PC-3 (cell line): ENCODE measurements at regions of chr2 and their contacts with region 1.

Region 1: DNA sequence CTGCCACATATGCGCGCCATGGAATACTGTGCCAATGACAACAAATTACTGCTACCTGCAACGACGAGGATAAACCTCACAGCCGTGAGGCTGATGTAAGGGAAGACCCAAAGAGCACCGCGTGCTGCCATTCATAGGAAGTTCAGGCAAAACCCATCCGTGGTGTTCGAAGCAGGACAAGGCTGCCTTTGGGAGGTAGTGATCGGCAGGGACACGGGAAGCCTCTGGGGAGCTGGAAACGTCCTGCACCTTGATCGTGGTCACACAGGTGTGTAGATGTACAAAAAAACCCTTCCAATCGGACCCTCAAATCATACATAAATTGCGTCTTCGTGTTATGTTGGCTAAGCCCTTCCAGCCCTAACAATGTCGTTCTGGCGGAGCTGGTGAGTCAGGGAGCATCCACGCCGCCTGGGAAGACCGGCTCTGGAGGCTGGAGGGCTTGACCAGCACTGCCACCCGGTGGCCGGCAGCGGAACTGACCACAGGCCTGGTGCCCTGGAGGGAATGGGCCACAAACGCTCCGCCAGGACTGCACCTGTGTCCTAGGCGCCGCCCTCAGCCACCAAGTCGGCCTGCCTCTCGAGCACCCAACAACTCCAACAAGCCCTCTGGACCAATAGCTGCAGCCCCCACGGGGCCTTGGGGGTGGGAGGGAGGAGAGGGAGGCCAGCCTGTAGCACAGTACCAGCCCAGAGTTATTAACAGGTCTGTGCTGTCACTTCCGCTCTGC is 4.1 kb upstream of the NEURL3 start:
- DNase-seq: peak; percentile 93
- ATAC-seq: peak; percentile 77
- H3K4me3 ChIP-seq: no peak overlapping the region
- H3K27ac ChIP-seq: no peak overlapping the region
- H3K4me1 ChIP-seq: peaks cover 27% of the 10 kb centered on the region
- H3K27me3 ChIP-seq: no peaks in the 10 kb centered on the region
- CTCF ChIP-seq: peak; percentile 94

Region 2: GRCh38 chr2:96344011-96344410 is 165.3 kb before region 1 on chr2:
- CTCF ChIA-PET with region 1: no interaction called
- POLR2A ChIA-PET with region 1: no interaction called
- intact Hi-C with region 1: loop called (anchors 5 kb)
- DNase-seq: no peak
- ATAC-seq: no peak
- H3K4me3 ChIP-seq: no peak overlapping the region
- H3K27ac ChIP-seq: no peak overlapping the region
- H3K4me1 ChIP-seq: peaks cover 32% of the 10 kb centered on the region
- H3K27me3 ChIP-seq: no peaks in the 10 kb centered on the region
- CTCF ChIP-seq: no peak

Region 3: DNA sequence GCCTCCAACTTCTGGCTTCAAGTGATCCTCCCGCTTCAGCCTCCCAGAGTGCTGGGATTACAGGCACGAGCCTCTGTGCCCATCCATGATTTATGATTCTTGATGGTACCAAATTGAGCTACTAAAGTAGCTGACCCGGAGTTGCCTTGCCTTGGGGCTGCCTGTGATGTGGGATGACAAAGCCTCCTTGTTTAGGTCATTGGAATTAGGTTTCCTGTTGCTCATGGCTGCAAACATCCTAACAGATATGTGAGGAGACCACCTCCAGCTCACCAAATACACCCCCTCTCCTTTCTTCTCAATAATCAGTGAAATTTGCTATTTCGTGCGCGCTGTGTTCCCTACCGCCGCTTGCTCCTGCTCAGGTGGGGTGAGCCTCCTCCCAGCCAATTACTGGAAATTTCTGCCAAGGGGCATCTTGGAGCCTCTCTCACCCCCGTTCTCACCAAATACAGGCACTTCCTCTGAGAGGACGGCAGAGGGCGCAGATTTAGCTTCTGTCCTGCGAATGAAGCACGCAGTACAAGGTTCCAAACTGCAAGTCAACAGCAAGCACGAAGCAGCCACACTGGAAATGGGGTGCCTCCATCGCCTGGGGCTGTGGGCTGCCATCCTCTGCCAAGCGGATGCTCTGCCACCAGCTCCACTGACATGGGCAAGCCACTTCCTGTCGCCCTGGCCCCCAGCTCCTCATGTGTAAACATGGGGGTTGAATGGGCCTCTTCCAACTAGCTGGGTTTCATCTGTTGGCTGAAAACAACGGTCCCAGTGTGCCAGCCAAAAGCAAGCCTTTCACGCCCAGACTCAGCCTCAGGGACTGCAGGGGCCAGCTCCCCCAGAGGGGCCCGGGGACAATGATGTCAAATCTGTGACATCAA is 102.0 kb before region 1 on chr2:
- CTCF ChIA-PET with region 1: interaction called, 38 read pairs
- POLR2A ChIA-PET with region 1: no interaction called
- intact Hi-C with region 1: loop called (anchors 1 kb)
- DNase-seq: peak; percentile 81
- ATAC-seq: peak; percentile 54
- H3K4me3 ChIP-seq: no peak overlapping the region
- H3K27ac ChIP-seq: peak overlapping the region; percentile 80
- H3K4me1 ChIP-seq: peaks cover 54% of the 10 kb centered on the region
- H3K27me3 ChIP-seq: no peaks in the 10 kb centered on the region
- CTCF ChIP-seq: peak; percentile 94

Region 4: DNA sequence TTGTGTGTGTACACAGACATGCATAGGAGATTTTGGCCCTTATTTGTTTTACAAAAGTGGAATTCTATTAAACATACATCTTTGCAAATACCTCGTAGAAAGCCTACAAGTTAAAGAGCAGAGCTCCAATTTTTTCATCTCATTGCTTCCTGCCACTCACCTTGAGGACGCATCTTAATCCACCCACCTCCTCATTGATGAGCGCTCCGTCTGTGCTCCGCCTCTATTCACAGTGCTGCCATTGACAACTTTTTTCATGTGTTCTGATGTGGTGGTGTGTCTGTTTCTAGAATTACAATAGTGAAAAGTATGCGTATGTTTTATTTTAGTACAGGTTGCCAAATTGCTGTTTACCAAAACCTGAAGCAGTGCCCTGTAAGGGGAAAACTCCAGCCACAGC is 40.4 kb before region 1 on chr2:
- CTCF ChIA-PET with region 1: no interaction called
- POLR2A ChIA-PET with region 1: no interaction called
- intact Hi-C with region 1: loop called (anchors 5 kb)
- DNase-seq: no peak
- ATAC-seq: no peak
- H3K4me3 ChIP-seq: no peak overlapping the region
- H3K27ac ChIP-seq: no peak overlapping the region
- H3K4me1 ChIP-seq: no peaks in the 10 kb centered on the region
- H3K27me3 ChIP-seq: no peaks in the 10 kb centered on the region
- CTCF ChIP-seq: no peak

Region 5: GRCh38 chr2:97788986-97789644 is 1279.8 kb after region 1 on chr2:
- CTCF ChIA-PET with region 1: no interaction called
- POLR2A ChIA-PET with region 1: interaction called, 15 read pairs
- intact Hi-C with region 1: no loop called
- DNase-seq: no peak
- ATAC-seq: no peak
- H3K4me3 ChIP-seq: no peak overlapping the region
- H3K27ac ChIP-seq: no peak overlapping the region
- H3K4me1 ChIP-seq: no peaks in the 10 kb centered on the region
- H3K27me3 ChIP-seq: no peaks in the 10 kb centered on the region
- CTCF ChIP-seq: no peak